Mucosa of descending colon (tissue), 3 donors: ENCODE measurements at regions of chr18 and their contacts with region 1.

Region 1: GRCh38 chr18:3554091-3554601 is 104.2 kb downstream of the TGIF1 start:
- DNase-seq: no peak
- ATAC-seq: no peak
- H3K4me3 ChIP-seq: no peak overlapping the region
- H3K4me1 ChIP-seq: peaks cover 7% of the 10 kb centered on the region
- CTCF ChIP-seq: no peak

Region 2: GRCh38 chr18:3321133-3321812 is 232.9 kb before region 1 on chr18:
- intact Hi-C with region 1: loop called in 1 of 2 experiments (anchors 10 kb)
- DNase-seq: no peak
- ATAC-seq: no peak
- H3K4me3 ChIP-seq: no peak overlapping the region
- H3K4me1 ChIP-seq: no peaks in the 10 kb centered on the region
- CTCF ChIP-seq: no peak